Activated CD8-positive, alpha-beta T cell treated with anti-CD3 and anti-CD28 coated beads for 36 hours (primary cell): ENCODE measurements at regions of chr1 and their contacts with region 1.

Region 1: GRCh38 chr1:27603681-27604578 is at the start of gene AHDC1:
- DNase-seq: peak; percentile 96
- ATAC-seq: peak; percentile 79
- H3K4me3 Mint-ChIP-seq: peak within 1 kb of the TSS; percentile 93
- H3K27ac Mint-ChIP-seq: peak within 1 kb of the TSS; percentile 85
- H3K4me1 Mint-ChIP-seq: peaks cover 41% of the 10 kb centered on the region
- H3K27me3 Mint-ChIP-seq: no peaks in the 10 kb centered on the region
- CTCF ChIP-seq: no peak
- total RNA-seq, gene AHDC1: 26.3 to 27.6 TPM

Region 2: DNA sequence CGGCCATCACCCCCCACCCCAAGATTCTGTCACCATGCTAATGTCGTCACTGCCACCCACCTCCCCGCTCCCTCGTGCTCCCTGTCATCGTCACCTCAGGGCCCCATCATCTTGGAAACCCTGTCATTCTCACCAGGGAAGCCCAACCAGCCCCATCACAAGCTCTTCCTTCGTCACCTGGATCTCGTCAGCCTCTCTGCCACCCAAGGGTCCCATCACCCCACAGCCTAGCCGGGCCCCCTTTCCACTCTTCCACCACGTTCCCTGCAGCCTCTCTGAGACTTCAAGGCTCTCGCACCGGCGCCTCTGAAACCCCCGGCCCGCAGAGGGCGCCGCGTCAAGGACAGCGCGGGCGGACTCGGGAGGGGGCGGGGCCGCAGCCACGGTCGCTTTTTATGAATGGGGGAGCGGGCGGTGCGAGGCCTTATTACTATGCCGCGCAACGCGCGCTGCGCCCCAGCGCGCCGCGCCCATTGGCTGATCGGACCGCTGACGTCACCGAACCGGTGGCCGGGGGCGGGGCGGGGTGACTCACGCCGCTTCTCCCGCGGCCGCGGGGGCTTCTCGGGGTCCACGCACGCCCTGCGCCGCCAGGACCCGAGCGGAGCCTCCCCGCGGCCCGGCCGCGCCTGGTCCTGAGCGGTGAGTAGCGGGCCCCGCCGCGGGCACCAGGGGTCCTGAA is 211.7 kb before region 1 on chr1 and contains the start of gene GPR3:
- CTCF ChIA-PET with region 1: interaction called, 106 read pairs
- POLR2A ChIA-PET with region 1: interaction called, 4 read pairs
- intact Hi-C with region 1: loop called (anchors 5 kb)
- DNase-seq: peak; percentile 96
- ATAC-seq: peak; percentile 92
- H3K4me3 Mint-ChIP-seq: peak within 1 kb of the TSS; percentile 65
- H3K27ac Mint-ChIP-seq: peak within 1 kb of the TSS; percentile 89
- H3K4me1 Mint-ChIP-seq: peaks cover 17% of the 10 kb centered on the region
- H3K27me3 Mint-ChIP-seq: no peaks in the 10 kb centered on the region
- CTCF ChIP-seq: peak; percentile 43
- total RNA-seq, gene GPR3: 1.1 to 1.7 TPM

Region 3: GRCh38 chr1:27525296-27526272 is 78.3 kb before region 1 on chr1:
- CTCF ChIA-PET with region 1: interaction called, 54 read pairs
- POLR2A ChIA-PET with region 1: interaction called, 5 read pairs
- intact Hi-C with region 1: loop called (anchors 5 kb)
- DNase-seq: peak; percentile 86
- ATAC-seq: peak; percentile 57
- H3K4me3 Mint-ChIP-seq: peak overlapping the region; percentile 97
- H3K27ac Mint-ChIP-seq: peak overlapping the region; percentile 96
- H3K4me1 Mint-ChIP-seq: peaks cover 51% of the 10 kb centered on the region
- H3K27me3 Mint-ChIP-seq: no peaks in the 10 kb centered on the region
- CTCF ChIP-seq: no peak

Region 4: DNA sequence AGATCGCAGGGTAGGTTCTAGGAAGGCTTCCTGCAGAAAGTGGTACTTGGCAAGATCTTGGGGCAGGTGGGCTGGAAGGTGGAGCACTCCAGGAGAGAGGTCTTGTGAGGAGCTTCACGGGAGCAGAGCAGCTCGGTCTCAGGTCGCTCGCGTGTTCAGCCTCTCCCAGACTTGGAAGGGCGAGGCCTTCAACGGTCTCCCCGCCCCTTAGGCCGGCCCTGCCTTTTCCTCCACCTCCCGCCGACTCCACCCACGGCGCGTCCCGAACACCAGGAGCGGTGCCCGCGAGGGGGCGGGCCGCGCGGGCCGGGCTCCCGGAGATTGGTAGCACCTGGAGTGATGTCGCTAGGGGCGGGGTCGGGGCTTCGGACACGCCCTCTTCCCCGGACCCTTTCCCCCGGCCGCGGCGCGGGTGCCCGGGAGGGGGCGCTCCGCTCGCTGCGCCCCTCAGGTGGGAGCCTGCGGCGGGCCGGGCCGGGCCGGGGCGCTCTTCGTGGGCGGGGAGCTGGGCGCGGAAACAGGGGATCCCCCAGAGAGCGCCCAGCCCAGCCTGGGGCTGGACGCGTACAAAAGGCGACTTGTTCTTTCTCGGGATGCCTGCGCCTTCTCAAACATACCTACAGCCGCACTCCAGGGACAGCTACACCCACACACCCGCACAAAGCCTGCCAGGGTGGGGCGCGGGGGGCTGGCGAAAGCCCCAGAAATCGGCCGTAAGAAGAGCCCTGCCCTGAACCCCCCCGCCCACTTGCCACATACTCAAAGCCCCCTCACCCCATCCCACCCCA is 35.4 kb before region 1 on chr1:
- CTCF ChIA-PET with region 1: interaction called, 36 read pairs
- POLR2A ChIA-PET with region 1: interaction called, 6 read pairs
- intact Hi-C with region 1: no loop called
- DNase-seq: peak; percentile 92
- ATAC-seq: peak; percentile 91
- H3K4me3 Mint-ChIP-seq: peak overlapping the region; percentile 44
- H3K27ac Mint-ChIP-seq: peak overlapping the region; percentile 32
- H3K4me1 Mint-ChIP-seq: peaks cover 25% of the 10 kb centered on the region
- H3K27me3 Mint-ChIP-seq: no peaks in the 10 kb centered on the region
- CTCF ChIP-seq: peak; percentile 73

Region 5: DNA sequence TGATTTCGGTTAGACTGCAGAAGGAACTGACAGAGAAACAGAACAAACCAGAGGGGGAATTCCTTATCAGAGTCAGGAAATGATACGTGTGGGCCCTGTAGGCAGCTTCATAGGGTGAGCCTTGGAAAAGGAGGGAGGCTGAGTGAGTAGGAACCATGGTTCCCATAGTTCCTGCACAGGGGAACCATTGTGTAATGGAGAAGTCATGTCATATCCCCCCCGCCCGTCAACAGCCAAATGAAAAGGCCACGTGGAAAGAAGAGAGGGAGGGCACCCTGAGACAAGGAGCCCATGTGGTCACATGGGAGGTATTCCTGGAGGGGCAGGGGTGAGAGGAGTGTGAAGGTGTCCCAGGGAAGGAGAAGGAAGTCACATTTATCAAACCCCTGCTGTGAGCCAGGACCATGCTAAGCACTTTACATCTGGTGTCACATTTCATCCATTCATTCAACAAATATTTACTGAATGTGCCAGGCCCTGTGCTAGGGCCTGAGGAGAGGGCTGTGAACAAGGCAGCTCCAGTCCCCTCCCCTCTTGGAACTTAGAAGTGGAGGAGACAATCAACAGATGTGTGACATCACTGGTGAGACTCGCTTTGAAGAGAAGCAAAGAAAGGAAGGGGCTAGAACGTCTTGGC is 46.7 kb after region 1 on chr1:
- CTCF ChIA-PET with region 1: interaction called, 13 read pairs
- POLR2A ChIA-PET with region 1: no interaction called
- intact Hi-C with region 1: no loop called
- DNase-seq: no peak
- ATAC-seq: peak; percentile 45
- H3K4me3 Mint-ChIP-seq: no peak overlapping the region
- H3K27ac Mint-ChIP-seq: peak overlapping the region; percentile 67
- H3K4me1 Mint-ChIP-seq: peaks cover 17% of the 10 kb centered on the region
- H3K27me3 Mint-ChIP-seq: no peaks in the 10 kb centered on the region
- CTCF ChIP-seq: no peak

Region 6: DNA sequence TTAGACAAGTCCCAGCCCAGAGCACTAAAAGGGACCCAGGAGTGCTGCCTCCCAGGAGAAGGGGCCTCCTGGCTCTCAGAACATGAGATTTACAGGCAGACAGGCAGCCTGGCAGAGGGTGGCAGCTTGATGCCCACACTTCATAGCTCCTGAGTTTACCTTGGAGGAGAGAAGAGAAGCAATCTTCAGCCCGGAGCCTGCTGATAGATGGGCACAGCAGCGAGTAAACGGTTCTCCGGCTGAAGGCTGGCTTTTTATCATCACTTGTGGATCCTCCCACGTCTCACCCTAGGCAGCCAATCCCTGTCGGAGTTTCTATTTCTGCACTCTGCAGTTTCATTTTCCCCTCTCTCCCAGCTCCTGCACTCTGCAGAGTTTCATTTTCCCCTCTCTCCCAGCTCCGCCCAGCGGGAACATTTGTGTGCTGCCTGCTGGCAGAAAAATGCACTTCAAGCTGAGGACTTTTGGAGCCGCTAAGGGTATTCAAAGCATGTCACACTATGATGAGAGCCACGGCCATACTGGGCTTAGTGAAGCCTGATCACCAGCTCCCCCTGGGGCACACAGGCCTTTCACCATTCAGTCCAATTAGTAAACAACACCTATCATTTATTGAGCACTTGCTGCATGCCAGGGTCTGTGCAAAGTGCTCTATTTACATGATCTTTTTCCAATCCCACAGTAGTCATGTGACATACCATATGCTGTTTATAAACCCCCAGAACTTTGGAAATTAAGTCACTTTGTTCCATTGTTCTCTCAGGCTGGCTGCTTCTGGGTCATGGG is 68.2 kb after region 1 on chr1 and contains the start of gene IFI6:
- CTCF ChIA-PET with region 1: interaction called, 533 read pairs
- POLR2A ChIA-PET with region 1: interaction called, 7 read pairs
- intact Hi-C with region 1: no loop called
- DNase-seq: peak; percentile 88
- ATAC-seq: peak; percentile 91
- H3K4me3 Mint-ChIP-seq: peak within 1 kb of the TSS; percentile 80
- H3K27ac Mint-ChIP-seq: peak within 1 kb of the TSS; percentile 90
- H3K4me1 Mint-ChIP-seq: peaks cover 34% of the 10 kb centered on the region
- H3K27me3 Mint-ChIP-seq: no peaks in the 10 kb centered on the region
- CTCF ChIP-seq: peak; percentile 35
- total RNA-seq, gene IFI6: 31.6 to 32.1 TPM

Region 7: GRCh38 chr1:27713869-27714513 is 110.1 kb after region 1 on chr1:
- CTCF ChIA-PET with region 1: no interaction called
- POLR2A ChIA-PET with region 1: no interaction called
- intact Hi-C with region 1: no loop called
- DNase-seq: no peak
- ATAC-seq: no peak
- H3K4me3 Mint-ChIP-seq: no peak overlapping the region
- H3K27ac Mint-ChIP-seq: no peak overlapping the region
- H3K4me1 Mint-ChIP-seq: no peaks in the 10 kb centered on the region
- H3K27me3 Mint-ChIP-seq: peaks cover 13% of the 10 kb centered on the region
- CTCF ChIP-seq: no peak

Region 8: GRCh38 chr1:27934818-27935549 is 331.1 kb after region 1 on chr1 and contains the start of gene SMPDL3B:
- CTCF ChIA-PET with region 1: no interaction called
- POLR2A ChIA-PET with region 1: no interaction called
- intact Hi-C with region 1: no loop called
- DNase-seq: no peak
- ATAC-seq: peak; percentile 34
- H3K4me3 Mint-ChIP-seq: peak within 1 kb of the TSS; percentile 62
- H3K27ac Mint-ChIP-seq: no peak within 1 kb of the TSS
- H3K4me1 Mint-ChIP-seq: peaks cover 9% of the 10 kb centered on the region
- H3K27me3 Mint-ChIP-seq: peaks cover 14% of the 10 kb centered on the region
- CTCF ChIP-seq: no peak
- total RNA-seq, gene SMPDL3B: 0.27 to 0.38 TPM